ENCODE measurements at regions of chr14 and their contacts with region 1.

Region 1: GRCh38 chr14:22852940-22853767 is 16.8 kb downstream of the MMP14 start:
- DNase-seq: peak; percentile 91
- H3K4me3 Mint-ChIP-seq: peak overlapping the region; percentile 52
- H3K27ac Mint-ChIP-seq: peak overlapping the region; percentile 51
- H3K4me1 Mint-ChIP-seq: no peaks in the 10 kb centered on the region
- H3K27me3 Mint-ChIP-seq: no peaks in the 10 kb centered on the region
- CTCF ChIP-seq: peak; percentile 77

Region 2: DNA sequence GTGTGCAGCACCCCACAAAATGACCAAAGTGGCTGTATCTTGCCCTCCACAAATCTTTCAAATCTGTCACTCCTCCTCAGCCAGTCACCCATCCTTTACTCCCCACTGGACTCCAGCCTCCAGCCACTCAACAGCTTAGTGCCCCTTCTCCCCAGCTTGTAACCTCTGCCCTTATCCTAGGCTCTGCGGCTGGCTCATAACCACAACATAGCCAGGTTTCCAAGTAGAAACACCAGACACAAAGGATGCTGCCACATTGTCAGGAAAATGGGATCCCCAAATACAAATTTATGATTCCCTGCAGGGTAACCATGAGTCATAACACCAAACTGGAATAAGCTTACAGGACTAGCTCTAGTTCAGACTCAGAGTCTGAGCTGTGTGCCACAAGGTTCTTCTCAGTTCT is 71.6 kb before region 1 on chr14:
- CTCF ChIA-PET with region 1: interaction called, 5 read pairs
- intact Hi-C with region 1: loop called (anchors 1 kb)
- DNase-seq: no peak
- H3K4me3 Mint-ChIP-seq: no peak overlapping the region
- H3K27ac Mint-ChIP-seq: peak overlapping the region; percentile 12
- H3K4me1 Mint-ChIP-seq: peaks cover 12% of the 10 kb centered on the region
- H3K27me3 Mint-ChIP-seq: no peaks in the 10 kb centered on the region
- CTCF ChIP-seq: no peak

Region 3: DNA sequence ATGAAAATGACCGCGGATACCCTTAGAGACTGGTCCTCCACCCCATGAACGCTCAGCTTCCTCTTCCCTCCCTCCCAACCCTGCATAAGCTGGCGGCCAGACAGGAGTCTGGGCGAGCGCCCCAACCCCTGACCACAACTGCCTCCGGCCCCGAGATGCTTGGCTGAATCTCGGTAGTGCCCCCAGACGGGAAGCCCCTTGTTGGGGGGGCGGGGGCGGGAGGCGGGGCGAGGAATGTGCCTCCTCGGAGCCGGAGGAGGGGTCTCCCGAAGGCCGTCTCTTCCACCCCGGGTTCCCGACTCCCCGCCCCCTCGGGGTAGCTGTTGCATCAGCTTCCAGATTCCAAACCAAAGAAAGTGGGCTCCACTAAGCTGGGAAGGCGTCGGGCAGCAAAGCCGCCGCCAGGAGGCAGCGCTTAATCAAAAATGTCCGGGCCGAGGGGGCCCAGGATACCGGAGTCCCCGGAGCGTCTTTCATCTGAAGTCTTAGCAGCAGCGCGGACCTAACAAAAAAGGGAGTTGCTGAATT is 30.5 kb before region 1 on chr14:
- CTCF ChIA-PET with region 1: interaction called, 46 read pairs
- intact Hi-C with region 1: loop called (anchors 1 kb)
- DNase-seq: peak; percentile 87
- H3K4me3 Mint-ChIP-seq: peak overlapping the region; percentile 71
- H3K27ac Mint-ChIP-seq: peak overlapping the region; percentile 94
- H3K4me1 Mint-ChIP-seq: peaks cover 54% of the 10 kb centered on the region
- H3K27me3 Mint-ChIP-seq: no peaks in the 10 kb centered on the region
- CTCF ChIP-seq: peak; percentile 66